AG04449 (cell line): ENCODE measurements at regions of chr1 and their contacts with region 1.

Region 1: GRCh38 chr1:237562242-237562823 is 328.4 kb downstream of the ZP4 start:
- DNase-seq: peak; percentile 19
- H3K4me3 ChIP-seq: no peak overlapping the region
- CTCF ChIP-seq: peak; percentile 15

Region 2: DNA sequence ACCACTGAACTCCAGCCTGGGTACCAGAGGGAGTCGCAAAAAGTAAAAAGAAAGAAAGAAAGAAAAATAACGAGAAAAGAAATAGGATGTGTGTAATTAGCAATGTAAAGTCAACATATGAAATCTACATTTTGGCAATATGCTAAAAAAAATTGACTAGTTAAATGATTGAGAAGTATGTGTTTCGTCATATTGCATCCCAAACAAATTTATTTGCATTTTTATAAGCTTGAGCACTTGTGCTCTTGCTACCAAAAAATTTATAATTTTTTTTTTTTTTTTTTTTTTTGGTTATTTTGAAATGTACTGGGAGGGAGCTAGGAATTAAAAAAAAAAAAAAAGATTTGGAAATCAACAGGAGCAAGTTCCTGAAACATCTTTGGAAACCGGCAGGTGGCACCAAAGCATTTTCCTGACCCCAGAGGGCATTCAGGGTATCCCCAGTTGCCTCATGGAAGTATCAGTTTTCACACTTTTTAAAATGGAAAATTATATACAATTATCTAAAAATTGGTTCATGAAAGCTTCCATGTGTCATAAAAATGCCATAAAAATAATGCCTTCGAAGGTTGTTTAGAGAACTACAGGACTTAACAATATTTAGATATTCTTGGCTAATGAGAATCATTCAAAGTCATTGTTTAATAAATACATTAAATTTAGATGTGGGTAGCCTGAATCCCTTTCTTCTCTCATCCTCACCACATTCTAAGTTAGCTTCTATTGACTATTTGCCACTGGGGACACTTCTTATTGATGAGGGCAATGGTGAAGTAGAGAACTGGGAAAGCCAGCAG is 953.2 kb before region 1 on chr1:
- CTCF ChIA-PET with region 1: interaction called, 22 read pairs
- POLR2A ChIA-PET with region 1: no interaction called
- DNase-seq: no peak
- H3K4me3 ChIP-seq: no peak overlapping the region
- CTCF ChIP-seq: peak; percentile 33

Region 3: GRCh38 chr1:236759252-236759859 is 803.0 kb before region 1 on chr1:
- CTCF ChIA-PET with region 1: interaction called, 17 read pairs
- POLR2A ChIA-PET with region 1: no interaction called
- DNase-seq: no peak
- H3K4me3 ChIP-seq: no peak overlapping the region
- CTCF ChIP-seq: peak; percentile 56

Region 4: DNA sequence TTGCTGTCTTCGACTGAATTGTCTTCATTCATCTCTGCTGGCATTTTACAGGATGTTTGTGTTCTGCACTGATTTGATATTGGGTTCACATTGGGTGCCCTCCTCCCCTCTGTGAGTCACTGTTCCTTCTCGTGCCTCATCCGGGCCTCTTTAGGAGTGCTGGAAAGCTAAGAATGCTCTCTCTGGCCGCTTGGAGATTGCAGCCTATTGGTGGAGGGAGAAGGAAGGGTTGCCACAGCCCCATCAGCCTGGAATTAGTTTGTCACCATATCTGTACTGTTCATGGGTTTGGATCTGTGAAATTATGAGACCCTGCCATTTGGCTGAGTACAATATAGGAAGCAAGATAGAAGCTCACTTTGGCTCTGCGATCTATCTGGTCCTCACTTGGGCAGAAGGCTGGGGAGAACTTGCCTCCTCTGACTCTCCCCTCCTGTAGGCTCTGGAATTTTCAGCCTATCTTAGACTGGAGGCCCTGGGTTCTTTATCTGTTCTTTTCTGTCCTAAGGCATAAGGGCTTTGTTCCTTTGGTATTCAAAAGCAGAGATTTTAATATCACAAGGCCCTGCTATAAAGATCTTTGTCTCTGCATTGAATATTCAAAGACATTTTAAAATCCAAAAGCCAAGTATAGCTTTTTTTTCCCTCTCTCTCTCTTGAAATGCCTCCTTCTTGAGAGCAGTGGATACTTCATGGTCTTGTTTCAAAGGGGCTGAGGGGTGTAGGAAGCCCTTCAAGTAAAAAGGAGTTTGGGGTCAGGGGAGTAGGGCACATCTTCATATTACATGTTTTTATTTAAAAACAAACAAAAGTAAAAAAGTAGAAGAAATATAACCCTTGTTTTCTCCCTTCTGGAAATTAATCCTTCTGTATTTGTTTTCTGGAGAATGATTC is 19.6 kb before region 1 on chr1:
- CTCF ChIA-PET with region 1: interaction called, 12 read pairs
- POLR2A ChIA-PET with region 1: no interaction called
- DNase-seq: no peak
- H3K4me3 ChIP-seq: no peak overlapping the region
- CTCF ChIP-seq: no peak

Region 5: DNA sequence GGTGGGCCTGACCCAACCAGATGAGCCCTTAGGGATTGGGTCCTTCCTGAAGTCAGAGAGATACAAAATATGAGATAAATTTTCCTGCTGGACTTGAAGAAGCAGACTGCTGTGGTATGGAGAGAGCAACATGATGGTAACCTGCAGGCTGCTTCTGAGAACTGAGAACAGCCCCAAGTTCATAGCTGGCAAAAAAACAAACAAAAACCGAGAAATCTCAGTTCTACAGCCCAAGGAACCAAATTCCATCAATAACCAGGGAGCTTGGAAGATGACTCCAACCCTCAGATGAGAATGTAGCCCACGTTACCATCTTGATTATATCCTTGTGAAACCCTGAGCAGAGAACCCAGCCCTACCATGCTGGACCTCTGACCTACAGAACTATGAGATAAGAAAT is 12.2 kb after region 1 on chr1:
- CTCF ChIA-PET with region 1: interaction called, 10 read pairs
- POLR2A ChIA-PET with region 1: no interaction called
- DNase-seq: no peak
- H3K4me3 ChIP-seq: no peak overlapping the region
- CTCF ChIP-seq: no peak

Region 6: DNA sequence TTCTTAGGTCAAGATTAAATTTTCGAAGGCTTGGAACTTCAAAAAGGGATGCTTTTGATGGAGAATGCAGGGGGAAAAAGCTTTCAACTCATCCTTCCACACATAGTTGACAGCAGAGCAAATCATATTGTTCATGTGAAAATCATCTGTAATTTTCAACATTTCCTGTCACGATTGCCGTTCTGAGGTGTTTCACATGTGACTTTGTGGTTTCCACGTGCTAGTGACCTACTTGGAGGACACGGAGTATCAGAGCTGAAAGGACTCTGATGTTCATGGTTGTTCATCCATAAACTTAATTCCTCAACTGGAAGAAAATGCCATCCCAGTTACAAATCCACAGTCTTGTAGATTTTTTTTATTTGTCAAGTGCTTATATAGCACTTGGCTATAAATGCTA is 249.3 kb after region 1 on chr1:
- CTCF ChIA-PET with region 1: no interaction called
- POLR2A ChIA-PET with region 1: no interaction called
- DNase-seq: no peak
- H3K4me3 ChIP-seq: no peak overlapping the region
- CTCF ChIP-seq: no peak

Region 7: GRCh38 chr1:237976331-237976730 is 414.0 kb after region 1 on chr1:
- CTCF ChIA-PET with region 1: no interaction called
- POLR2A ChIA-PET with region 1: no interaction called
- DNase-seq: no peak
- H3K4me3 ChIP-seq: no peak overlapping the region
- CTCF ChIP-seq: no peak